Activated CD4-positive, alpha-beta memory T cell treated with anti-CD3 and anti-CD28 coated beads for 36 hours (primary cell): ENCODE measurements at regions of chrX and their contacts with region 1.

Region 1: GRCh38 chrX:83630662-83631061 is 122.6 kb downstream of the POU3F4 start:
- DNase-seq: no peak
- H3K4me3 Mint-ChIP-seq: no peak overlapping the region
- H3K27ac Mint-ChIP-seq: no peak overlapping the region
- H3K4me1 Mint-ChIP-seq: peaks cover 2% of the 10 kb centered on the region
- H3K27me3 Mint-ChIP-seq: no peaks in the 10 kb centered on the region

Region 2: DNA sequence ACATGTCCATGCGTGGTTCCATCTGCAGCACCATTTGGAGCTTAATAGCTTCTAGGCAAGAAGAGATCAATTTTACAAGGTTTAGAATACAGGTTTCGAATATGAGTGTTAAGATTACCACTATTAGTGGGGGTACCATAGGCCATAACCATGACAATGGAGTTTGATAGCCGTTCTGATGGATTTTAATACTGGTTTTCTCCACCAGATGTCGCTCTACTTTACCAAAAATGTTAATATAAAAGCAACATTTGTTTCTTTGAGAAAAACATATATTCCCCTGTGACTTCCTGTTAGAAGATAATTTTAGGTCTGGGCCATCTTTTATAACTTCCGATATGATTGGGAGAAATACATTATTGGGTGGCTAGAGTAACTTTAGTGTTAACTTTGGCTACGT is 622.2 kb before region 1 on chrX:
- CTCF ChIA-PET with region 1: interaction called, 3 read pairs
- POLR2A ChIA-PET with region 1: no interaction called
- intact Hi-C with region 1: loop called (anchors 1 kb)
- DNase-seq: no peak
- H3K4me3 Mint-ChIP-seq: no peak overlapping the region
- H3K27ac Mint-ChIP-seq: no peak overlapping the region
- H3K4me1 Mint-ChIP-seq: no peaks in the 10 kb centered on the region
- H3K27me3 Mint-ChIP-seq: no peaks in the 10 kb centered on the region

Region 3: GRCh38 chrX:83469551-83469950 is 161.1 kb before region 1 on chrX:
- CTCF ChIA-PET with region 1: interaction called, 5 read pairs
- POLR2A ChIA-PET with region 1: no interaction called
- intact Hi-C with region 1: loop called (anchors 1 kb)
- DNase-seq: no peak
- H3K4me3 Mint-ChIP-seq: no peak overlapping the region
- H3K27ac Mint-ChIP-seq: no peak overlapping the region
- H3K4me1 Mint-ChIP-seq: no peaks in the 10 kb centered on the region
- H3K27me3 Mint-ChIP-seq: no peaks in the 10 kb centered on the region